Right cardiac atrium (tissue), 5 donors: ENCODE measurements at regions of chr12 and their contacts with region 1.

Region 1: GRCh38 chr12:120904197-120904773 is at the start of gene SPPL3:
- DNase-seq: peak; percentile 93 to 98 (median 98)
- ATAC-seq: peak; percentile 93 to 94
- H3K4me3 ChIP-seq: peak within 1 kb of the TSS; percentile 98
- H3K27ac ChIP-seq: peak within 1 kb of the TSS; percentile 92
- H3K4me1 ChIP-seq: peaks cover 2% of the 10 kb centered on the region
- H3K27me3 ChIP-seq: no peaks in the 10 kb centered on the region
- total RNA-seq, gene SPPL3: 30.9 to 32.4 (median 31.7) TPM

Region 2: GRCh38 chr12:120725659-120726509 is 178.4 kb before region 1 on chr12 and contains the start of gene ACADS:
- intact Hi-C with region 1: loop called in 1 of 4 experiments (anchors 10 kb)
- DNase-seq: peak; percentile 94 to 97 (median 97)
- ATAC-seq: peak; percentile 99
- H3K4me3 ChIP-seq: peak within 1 kb of the TSS; percentile 58
- H3K27ac ChIP-seq: peak within 1 kb of the TSS; percentile 40
- H3K4me1 ChIP-seq: peaks cover 2% of the 10 kb centered on the region
- H3K27me3 ChIP-seq: no peaks in the 10 kb centered on the region
- total RNA-seq, gene ACADS: 34.2 to 51.3 (median 42.5) TPM